HCT116 (cell line): ENCODE measurements at regions of chr1 and their contacts with region 1.

Region 1: DNA sequence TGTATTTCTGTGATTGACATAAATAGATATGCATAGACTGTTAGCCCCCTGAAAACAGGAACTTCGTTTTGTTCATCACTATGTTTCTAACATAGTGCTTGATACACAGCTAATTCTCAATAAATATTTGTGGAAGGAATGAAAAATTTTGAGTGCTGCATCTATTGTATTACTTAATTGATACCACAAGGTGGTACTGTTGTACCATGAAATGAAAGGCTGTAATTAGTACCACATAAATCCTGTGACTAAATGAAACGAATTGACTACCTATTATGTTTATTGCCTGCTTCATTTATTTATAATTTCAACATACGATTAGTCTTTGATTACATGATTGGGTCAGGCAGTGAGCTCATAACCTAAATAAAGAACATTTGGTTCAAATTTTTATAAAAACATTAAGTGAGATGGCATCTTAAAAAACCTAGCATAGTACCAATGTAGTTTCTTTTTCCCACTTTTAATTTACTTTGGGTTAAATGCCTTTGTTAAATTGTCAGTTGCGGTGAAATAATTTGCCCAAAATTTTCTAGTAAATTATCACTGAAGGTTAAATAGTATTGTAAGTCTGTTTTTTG is 15.0 kb upstream of the TGFB2 start:
- DNase-seq: peak; percentile 31
- ATAC-seq: peak; percentile 69
- H3K4me3 ChIP-seq: no peak overlapping the region
- H3K27ac ChIP-seq: no peak overlapping the region; the same call in 1 of the 2 replicates
- H3K4me1 ChIP-seq: no peaks in the 10 kb centered on the region
- H3K27me3 ChIP-seq: no peaks in the 10 kb centered on the region
- CTCF ChIP-seq: peak in 2 of 3 experiments; percentile 63 to 80; a peak in 3 of 6 replicates
- POLR2A ChIP-seq: no peak
- RAD21 ChIP-seq: peak; percentile 86

Region 2: GRCh38 chr1:217569021-217569420 is 761.1 kb before region 1 on chr1:
- CTCF ChIA-PET with region 1: no interaction called
- POLR2A ChIA-PET with region 1: no interaction called
- RAD21 ChIA-PET with region 1: no interaction called
- intact Hi-C with region 1: no loop called
- DNase-seq: no peak
- ATAC-seq: no peak
- H3K4me3 ChIP-seq: no peak overlapping the region
- H3K27ac ChIP-seq: no peak overlapping the region
- H3K4me1 ChIP-seq: no peaks in the 10 kb centered on the region
- H3K27me3 ChIP-seq: no peaks in the 10 kb centered on the region
- CTCF ChIP-seq: no peak
- POLR2A ChIP-seq: no peak
- RAD21 ChIP-seq: no peak

Region 3: GRCh38 chr1:218390618-218391017 is 60.5 kb after region 1 on chr1:
- CTCF ChIA-PET with region 1: no interaction called
- POLR2A ChIA-PET with region 1: no interaction called
- RAD21 ChIA-PET with region 1: no interaction called
- intact Hi-C with region 1: no loop called
- DNase-seq: no peak
- ATAC-seq: no peak
- H3K4me3 ChIP-seq: no peak overlapping the region
- H3K27ac ChIP-seq: no peak overlapping the region
- H3K4me1 ChIP-seq: no peaks in the 10 kb centered on the region
- H3K27me3 ChIP-seq: no peaks in the 10 kb centered on the region
- CTCF ChIP-seq: no peak
- POLR2A ChIP-seq: no peak
- RAD21 ChIP-seq: no peak

Region 4: GRCh38 chr1:219189021-219189824 is 859.1 kb after region 1 on chr1:
- CTCF ChIA-PET with region 1: no interaction called
- POLR2A ChIA-PET with region 1: no interaction called
- RAD21 ChIA-PET with region 1: no interaction called
- intact Hi-C with region 1: loop called (anchors 10 kb)
- DNase-seq: no peak
- ATAC-seq: no peak
- H3K4me3 ChIP-seq: no peak overlapping the region
- H3K27ac ChIP-seq: no peak overlapping the region
- H3K4me1 ChIP-seq: no peaks in the 10 kb centered on the region
- H3K27me3 ChIP-seq: no peaks in the 10 kb centered on the region
- CTCF ChIP-seq: no peak
- POLR2A ChIP-seq: no peak
- RAD21 ChIP-seq: no peak

Region 5: DNA sequence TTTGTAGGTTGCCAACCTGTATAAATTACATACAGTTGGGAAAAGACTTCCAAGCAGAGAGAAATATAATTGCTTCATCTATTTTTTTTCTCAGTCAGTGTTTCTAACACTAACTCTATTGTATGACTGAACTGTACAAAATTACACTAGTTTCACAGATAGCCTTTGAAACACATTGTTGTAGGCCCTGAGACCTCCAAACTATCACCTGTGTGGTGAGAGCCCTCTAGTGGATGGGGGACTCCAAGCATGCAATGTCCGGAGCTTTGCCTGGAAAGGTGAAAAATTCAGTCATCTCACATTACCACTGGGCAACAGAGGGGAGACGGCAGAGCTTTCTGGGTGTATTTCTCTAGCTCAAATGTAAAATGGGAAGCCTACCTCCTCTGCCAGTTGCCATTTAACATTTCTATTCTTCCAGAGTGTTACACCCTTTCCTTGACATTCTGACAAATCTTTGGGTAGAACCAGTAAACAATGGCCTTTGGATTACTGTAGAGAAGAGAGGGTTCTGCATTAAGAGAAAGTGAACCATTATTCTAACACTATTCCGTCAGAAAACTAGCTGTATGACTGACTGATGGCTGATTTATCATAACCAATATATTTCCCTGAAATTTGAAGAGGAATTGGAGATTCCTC is 1055.8 kb after region 1 on chr1:
- CTCF ChIA-PET with region 1: interaction called, 5 read pairs
- POLR2A ChIA-PET with region 1: no interaction called
- RAD21 ChIA-PET with region 1: no interaction called
- intact Hi-C with region 1: loop called (anchors 1 kb)
- DNase-seq: peak; percentile 41
- ATAC-seq: peak; percentile 98
- H3K4me3 ChIP-seq: no peak overlapping the region
- H3K27ac ChIP-seq: no peak overlapping the region
- H3K4me1 ChIP-seq: no peaks in the 10 kb centered on the region
- H3K27me3 ChIP-seq: no peaks in the 10 kb centered on the region
- CTCF ChIP-seq: peak; percentile 63 to 89 (median 86)
- POLR2A ChIP-seq: no peak
- RAD21 ChIP-seq: peak; percentile 85

Region 6: GRCh38 chr1:219416594-219417238 is 1086.6 kb after region 1 on chr1:
- CTCF ChIA-PET with region 1: no interaction called
- POLR2A ChIA-PET with region 1: no interaction called
- RAD21 ChIA-PET with region 1: no interaction called
- intact Hi-C with region 1: loop called (anchors 2 kb)
- DNase-seq: peak; percentile 45
- ATAC-seq: peak; percentile 95
- H3K4me3 ChIP-seq: no peak overlapping the region
- H3K27ac ChIP-seq: no peak overlapping the region
- H3K4me1 ChIP-seq: no peaks in the 10 kb centered on the region
- H3K27me3 ChIP-seq: no peaks in the 10 kb centered on the region
- CTCF ChIP-seq: peak; percentile 34 to 80 (median 79); a peak in 4 of 6 replicates
- POLR2A ChIP-seq: no peak
- RAD21 ChIP-seq: peak; percentile 56

Region 7: GRCh38 chr1:219566951-219567947 is 1237.1 kb after region 1 on chr1:
- CTCF ChIA-PET with region 1: interaction called, 3 read pairs
- POLR2A ChIA-PET with region 1: no interaction called
- RAD21 ChIA-PET with region 1: no interaction called
- intact Hi-C with region 1: loop called (anchors 2 kb)
- DNase-seq: peak; percentile 21
- ATAC-seq: peak; percentile 68
- H3K4me3 ChIP-seq: no peak overlapping the region
- H3K27ac ChIP-seq: no peak overlapping the region
- H3K4me1 ChIP-seq: no peaks in the 10 kb centered on the region
- H3K27me3 ChIP-seq: no peaks in the 10 kb centered on the region
- CTCF ChIP-seq: peak; percentile 41 to 64 (median 49); a peak in 4 of 6 replicates
- POLR2A ChIP-seq: no peak
- RAD21 ChIP-seq: peak; percentile 74

Region 8: GRCh38 chr1:219660666-219661463 is 1330.7 kb after region 1 on chr1:
- CTCF ChIA-PET with region 1: interaction called, 5 read pairs
- POLR2A ChIA-PET with region 1: no interaction called
- RAD21 ChIA-PET with region 1: no interaction called
- intact Hi-C with region 1: loop called (anchors 2 kb)
- DNase-seq: peak; percentile 87
- ATAC-seq: peak; percentile 97
- H3K4me3 ChIP-seq: peak overlapping the region in 1 of 2 experiments; percentile 23; a peak in 2 of 4 replicates
- H3K27ac ChIP-seq: no peak overlapping the region
- H3K4me1 ChIP-seq: peaks cover 4 to 6% of the 10 kb centered on the region in 2 experiments; a peak in 2 of 4 replicates
- H3K27me3 ChIP-seq: no peaks in the 10 kb centered on the region
- CTCF ChIP-seq: peak; percentile 87 to 94 (median 88)
- POLR2A ChIP-seq: no peak
- RAD21 ChIP-seq: peak; percentile 91